ENCODE measurements at regions of chr1 and their contacts with region 1.

Region 1: DNA sequence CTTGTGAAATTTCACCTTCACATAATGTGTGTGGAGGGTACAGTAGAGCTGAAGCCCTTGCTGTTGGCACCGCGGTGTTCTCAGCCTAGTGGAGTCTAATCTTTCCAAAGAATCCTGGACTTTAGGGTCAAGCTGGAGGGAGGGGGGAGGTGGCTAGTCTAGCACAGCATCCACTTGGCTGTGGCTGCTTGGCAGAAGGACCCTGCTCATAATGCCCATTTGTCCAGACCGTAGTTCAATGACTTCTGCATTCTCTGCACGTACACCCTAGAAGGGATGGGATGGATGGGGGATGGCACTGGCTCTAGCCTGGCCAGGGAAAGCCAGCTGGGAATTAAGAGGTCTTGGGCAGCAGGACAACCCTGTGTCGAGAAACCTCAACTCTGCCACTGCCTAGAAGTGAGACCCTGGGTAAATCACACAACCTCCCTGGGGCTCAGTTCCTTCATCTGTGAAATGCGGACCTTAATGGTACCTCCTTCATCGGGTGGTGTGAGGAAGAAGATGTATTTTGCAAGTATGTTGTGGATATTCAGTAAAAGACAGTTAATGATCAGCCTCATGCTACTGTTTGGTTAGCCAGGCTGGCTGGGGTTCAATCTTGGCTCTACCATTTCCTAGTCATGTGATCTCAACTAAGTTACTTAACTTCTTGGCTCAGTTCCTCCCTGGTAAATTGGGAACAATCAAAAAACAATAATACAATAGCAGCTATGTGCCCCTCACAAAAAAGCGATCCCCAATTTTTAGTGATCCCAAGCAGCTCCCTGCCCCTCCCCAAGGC is 27.2 kb upstream of the CLIC4 start:
- DNase-seq: no peak
- ATAC-seq: no peak
- H3K4me3 ChIP-seq: no peak overlapping the region
- H3K27ac ChIP-seq: no peak overlapping the region
- H3K4me1 ChIP-seq: no peaks in the 10 kb centered on the region; the same call in 1 of the 2 replicates
- H3K27me3 ChIP-seq: no peaks in the 10 kb centered on the region
- CTCF ChIP-seq: no peak

Region 2: GRCh38 chr1:24705260-24706073 is 12.6 kb before region 1 on chr1:
- CTCF ChIA-PET with region 1: interaction called, 10 read pairs
- POLR2A ChIA-PET with region 1: no interaction called
- in situ Hi-C with region 1: no loop called
- intact Hi-C with region 1: no loop called
- DNase-seq: peak; percentile 78
- ATAC-seq: peak; percentile 96
- H3K4me3 ChIP-seq: peak overlapping the region; percentile 31 to 66
- H3K27ac ChIP-seq: peak overlapping the region; percentile 69
- H3K4me1 ChIP-seq: peaks cover 21% of the 10 kb centered on the region
- H3K27me3 ChIP-seq: no peaks in the 10 kb centered on the region
- CTCF ChIP-seq: no peak

Measured in Panc1 (cell line).